ENCODE measurements at regions of chr3 and their contacts with region 1.

Region 1: DNA sequence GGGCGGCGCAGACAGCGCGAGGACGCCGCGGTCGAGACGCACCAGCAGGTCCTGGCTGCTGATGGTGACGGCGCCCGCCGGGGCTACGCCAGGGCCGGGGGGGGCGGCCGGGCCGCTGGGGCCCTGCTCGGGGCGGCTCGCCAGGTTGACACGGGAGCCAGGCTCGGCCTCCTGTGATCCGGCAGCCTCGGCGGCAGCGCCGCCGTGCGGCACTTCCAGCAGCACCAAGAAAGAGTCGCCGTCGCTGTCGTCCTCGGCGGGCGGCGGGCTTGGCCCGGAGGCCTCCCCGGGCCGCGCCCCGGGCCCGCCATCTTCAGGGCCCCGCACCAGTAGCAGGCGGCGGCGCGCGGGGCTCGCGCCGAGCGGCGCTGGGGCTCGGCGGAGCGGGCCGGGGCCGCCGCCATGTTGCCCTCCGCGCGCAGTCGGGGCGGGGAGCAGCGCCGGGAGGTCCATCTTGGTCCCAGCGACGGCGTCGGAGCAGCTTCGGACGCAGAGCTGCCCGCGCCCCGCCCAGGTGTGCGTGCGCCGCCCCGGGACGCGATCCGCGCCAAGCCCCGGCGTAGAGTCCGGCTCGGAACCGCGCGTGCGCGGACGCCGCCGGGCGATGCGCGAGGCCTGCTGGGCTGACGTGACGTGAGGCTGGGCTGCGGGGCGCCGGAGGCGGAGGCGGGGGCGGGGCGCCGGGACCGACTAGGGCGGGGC is at the start of gene ZXDC:
- DNase-seq: peak; percentile 94
- H3K4me3 ChIP-seq: peak within 1 kb of the TSS; percentile 58 to 72 (median 65)
- H3K27ac ChIP-seq: peak within 1 kb of the TSS; percentile 73
- H3K4me1 ChIP-seq: peaks cover 33% of the 10 kb centered on the region
- H3K27me3 ChIP-seq: no peaks in the 10 kb centered on the region
- CTCF ChIP-seq: peak; percentile 21 to 58
- POLR2A ChIP-seq: peak; percentile 81
- total RNA-seq, gene ZXDC: 21.3 and 22.6 TPM in 2 replicates

Region 2: DNA sequence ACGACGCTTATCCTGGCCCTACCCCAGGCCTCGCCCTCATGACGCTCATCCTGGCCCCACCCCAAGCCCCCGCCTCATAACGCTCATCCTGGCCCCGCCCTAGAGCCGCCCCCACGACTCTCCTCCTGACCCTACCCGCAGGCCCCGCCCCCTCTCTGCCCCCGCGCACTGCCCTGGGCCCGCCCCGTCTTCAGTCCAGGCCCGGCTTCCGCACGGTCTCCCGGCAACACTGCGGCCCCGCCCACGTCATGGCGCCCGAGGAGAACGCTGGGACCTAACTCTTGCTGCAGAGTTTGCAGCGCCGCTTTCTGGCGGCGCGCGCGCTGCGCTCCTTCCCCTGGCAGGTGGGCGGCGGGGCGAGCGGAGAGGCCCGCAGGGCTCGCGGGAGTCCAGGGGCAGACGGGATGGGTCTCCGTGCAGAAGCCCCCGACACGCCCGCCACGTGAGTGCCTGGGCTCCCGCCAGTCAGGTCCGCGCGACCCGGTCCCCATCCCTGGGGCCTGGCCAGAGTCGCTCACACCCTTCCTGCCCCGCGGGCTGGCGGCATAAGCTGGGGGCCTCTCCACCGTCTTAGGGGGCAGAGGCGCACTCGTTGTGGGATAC is 559.1 kb before region 1 on chr3:
- CTCF ChIA-PET with region 1: no interaction called
- POLR2A ChIA-PET with region 1: no interaction called
- dilution Hi-C with region 1: no loop called
- intact Hi-C with region 1: loop called (anchors 10 kb)
- DNase-seq: peak; percentile 92
- H3K4me3 ChIP-seq: peak overlapping the region; percentile 4 to 85 (median 62)
- H3K27ac ChIP-seq: peak overlapping the region; percentile 54
- H3K4me1 ChIP-seq: no peaks in the 10 kb centered on the region
- H3K27me3 ChIP-seq: no peaks in the 10 kb centered on the region
- CTCF ChIP-seq: no peak
- POLR2A ChIP-seq: peak; percentile 36

Region 3: DNA sequence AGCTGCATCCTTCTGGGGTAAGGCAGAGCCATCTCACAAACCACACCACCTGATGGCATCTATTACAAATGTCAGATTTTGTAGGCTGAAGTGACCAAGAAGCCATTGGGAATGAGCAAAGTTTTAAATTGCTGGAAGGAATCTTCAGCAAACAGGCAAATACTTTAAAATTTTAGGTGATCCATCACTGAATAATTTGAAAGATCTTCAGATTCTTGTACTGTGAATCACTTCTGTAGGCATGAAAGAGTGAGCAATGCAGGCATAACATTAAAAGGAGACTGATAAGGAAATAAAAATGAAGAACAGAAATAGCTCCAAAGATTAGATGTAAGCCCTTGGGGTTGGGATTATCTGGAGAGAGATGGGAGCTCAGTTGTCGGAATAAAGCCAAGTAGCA is 259.1 kb before region 1 on chr3:
- CTCF ChIA-PET with region 1: no interaction called
- POLR2A ChIA-PET with region 1: no interaction called
- dilution Hi-C with region 1: no loop called
- intact Hi-C with region 1: no loop called
- DNase-seq: no peak
- H3K4me3 ChIP-seq: no peak overlapping the region
- H3K27ac ChIP-seq: no peak overlapping the region
- H3K4me1 ChIP-seq: peaks cover 8% of the 10 kb centered on the region
- H3K27me3 ChIP-seq: peaks cover 25 to 46% of the 10 kb centered on the region in 2 experiments
- CTCF ChIP-seq: no peak
- POLR2A ChIP-seq: no peak

Region 4: DNA sequence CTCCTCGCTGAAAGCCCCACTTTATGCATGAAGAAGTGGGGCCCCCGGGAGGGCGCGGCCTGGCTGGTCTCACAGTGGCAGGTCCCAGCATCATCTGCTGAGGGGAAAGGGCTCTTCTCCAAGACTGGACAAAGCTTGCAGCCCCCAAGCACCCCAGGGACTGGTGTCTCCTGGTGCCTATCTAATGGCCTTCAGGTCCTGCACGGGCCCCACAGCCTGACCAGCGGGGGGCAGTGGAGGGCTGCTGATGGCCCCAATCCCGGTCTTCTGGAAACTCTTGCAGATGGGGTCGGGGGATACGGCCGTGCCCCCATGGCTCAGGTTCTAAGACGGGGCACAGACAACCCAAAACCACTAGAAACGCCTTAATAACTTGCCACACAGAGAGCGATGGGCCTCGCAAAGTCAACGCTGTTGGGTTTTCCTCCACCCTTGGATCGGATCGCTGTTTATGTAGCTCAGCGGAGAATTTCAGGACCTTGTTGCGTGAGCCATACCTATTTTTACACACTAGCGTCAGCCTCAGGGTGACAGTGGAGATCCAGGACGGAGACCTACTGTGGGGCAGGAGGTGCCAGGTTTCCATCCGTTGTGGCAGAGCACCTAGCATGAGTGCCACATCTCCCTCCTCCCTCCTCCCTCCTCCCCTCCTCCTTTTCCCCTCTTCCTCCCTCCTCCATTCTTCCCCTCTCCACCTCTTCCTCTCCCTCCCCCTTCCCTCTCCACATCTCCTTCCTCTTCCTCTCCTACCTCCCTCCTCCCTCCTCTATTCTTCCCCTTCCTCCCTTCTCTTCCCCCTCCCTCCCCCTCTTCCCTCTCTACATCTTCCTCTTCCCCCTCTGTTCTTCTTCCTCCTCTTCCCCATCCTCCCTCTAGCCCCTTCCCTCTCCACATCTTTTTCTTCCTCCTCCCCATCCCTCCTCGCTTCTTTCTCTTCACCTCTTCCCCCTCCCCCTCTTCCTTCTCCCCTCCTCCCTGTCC is 215.9 kb before region 1 on chr3:
- CTCF ChIA-PET with region 1: interaction called, 7 read pairs
- POLR2A ChIA-PET with region 1: no interaction called
- dilution Hi-C with region 1: no loop called
- intact Hi-C with region 1: loop called (anchors 2 kb)
- DNase-seq: peak; percentile 54
- H3K4me3 ChIP-seq: no peak overlapping the region
- H3K27ac ChIP-seq: no peak overlapping the region
- H3K4me1 ChIP-seq: no peaks in the 10 kb centered on the region
- H3K27me3 ChIP-seq: peaks cover 0 to under 1% of the 10 kb centered on the region in 2 experiments
- CTCF ChIP-seq: peak; percentile 86 to 88
- POLR2A ChIP-seq: no peak

Region 5: DNA sequence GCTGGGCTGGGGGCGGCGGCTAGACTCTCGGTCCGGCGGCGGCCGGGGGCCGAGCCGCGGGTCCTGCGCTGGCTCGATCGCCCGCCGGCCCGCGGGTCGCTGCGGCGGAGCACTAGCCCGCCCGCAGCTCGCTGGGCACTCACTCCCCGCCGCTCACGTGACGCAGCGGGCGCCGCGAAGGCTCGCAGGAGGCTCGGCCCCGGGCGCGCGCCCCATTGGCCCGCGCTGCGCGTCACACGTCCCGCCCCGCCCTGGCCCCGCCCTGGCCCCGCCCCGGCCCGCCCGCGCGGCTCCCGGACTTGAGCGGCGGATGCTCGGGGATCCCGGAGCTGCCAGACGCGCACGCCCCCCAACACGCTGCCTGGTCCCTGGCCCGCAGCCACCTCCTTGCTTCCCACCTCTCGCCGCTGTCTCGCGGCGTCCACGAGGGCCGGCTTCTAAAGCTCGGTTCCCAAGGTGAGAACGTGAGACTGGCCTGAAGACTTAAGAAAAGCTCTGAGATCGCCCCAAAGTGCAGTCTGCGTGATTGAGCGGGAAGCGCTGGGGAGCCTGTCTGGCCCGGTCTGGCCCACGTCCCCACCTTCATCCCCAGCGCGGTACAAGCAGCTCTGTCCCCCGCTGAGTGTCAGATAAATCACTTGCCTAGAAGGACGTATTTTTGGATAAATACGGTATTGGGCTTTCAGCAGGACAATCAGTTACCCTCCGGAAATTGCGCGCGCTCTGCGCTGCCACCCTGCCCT is 118.1 kb before region 1 on chr3 and contains the start of gene KLF15:
- CTCF ChIA-PET with region 1: no interaction called
- POLR2A ChIA-PET with region 1: no interaction called
- dilution Hi-C with region 1: no loop called
- intact Hi-C with region 1: loop called (anchors 1 kb)
- DNase-seq: peak; percentile 82
- H3K4me3 ChIP-seq: peak within 1 kb of the TSS; percentile 21 to 55 (median 42)
- H3K27ac ChIP-seq: no peak within 1 kb of the TSS
- H3K4me1 ChIP-seq: peaks cover 12% of the 10 kb centered on the region
- H3K27me3 ChIP-seq: peaks cover 14 to 29% of the 10 kb centered on the region in 2 experiments
- CTCF ChIP-seq: no peak
- POLR2A ChIP-seq: no peak
- total RNA-seq, gene KLF15: 1.4 and 3.0 TPM in 2 replicates

Region 6: GRCh38 chr3:126487151-126487771 is 11.7 kb after region 1 on chr3:
- CTCF ChIA-PET with region 1: interaction called, 8 read pairs
- POLR2A ChIA-PET with region 1: no interaction called
- dilution Hi-C with region 1: no loop called
- intact Hi-C with region 1: loop called (anchors 1 kb)
- DNase-seq: peak; percentile 48
- H3K4me3 ChIP-seq: no peak overlapping the region
- H3K27ac ChIP-seq: no peak overlapping the region
- H3K4me1 ChIP-seq: peaks cover 15% of the 10 kb centered on the region
- H3K27me3 ChIP-seq: peaks cover 0 to 1% of the 10 kb centered on the region in 2 experiments
- CTCF ChIP-seq: peak; percentile 16 to 45
- POLR2A ChIP-seq: no peak

Region 7: GRCh38 chr3:126703512-126704462 is 228.2 kb after region 1 on chr3 and contains the start of gene CHCHD6:
- CTCF ChIA-PET with region 1: no interaction called
- POLR2A ChIA-PET with region 1: no interaction called
- dilution Hi-C with region 1: no loop called
- intact Hi-C with region 1: loop called (anchors 5 kb)
- DNase-seq: peak; percentile 95
- H3K4me3 ChIP-seq: peak within 1 kb of the TSS; percentile 31 to 45 (median 35)
- H3K27ac ChIP-seq: no peak within 1 kb of the TSS
- H3K4me1 ChIP-seq: peaks cover 10% of the 10 kb centered on the region
- H3K27me3 ChIP-seq: peaks cover 4 to 21% of the 10 kb centered on the region in 2 experiments
- CTCF ChIP-seq: peak in 1 of 2 donors; percentile 2
- POLR2A ChIP-seq: no peak
- total RNA-seq, gene CHCHD6: 8.4 and 13.4 TPM in 2 replicates

Region 8: GRCh38 chr3:126911162-126912026 is 435.8 kb after region 1 on chr3:
- CTCF ChIA-PET with region 1: no interaction called
- POLR2A ChIA-PET with region 1: no interaction called
- dilution Hi-C with region 1: no loop called
- intact Hi-C with region 1: loop called (anchors 10 kb)
- DNase-seq: peak; percentile 96
- H3K4me3 ChIP-seq: no peak overlapping the region
- H3K27ac ChIP-seq: peak overlapping the region; percentile 59
- H3K4me1 ChIP-seq: peaks cover 24% of the 10 kb centered on the region
- H3K27me3 ChIP-seq: peaks cover 11 to 23% of the 10 kb centered on the region in 2 experiments
- CTCF ChIP-seq: no peak
- POLR2A ChIP-seq: peak; percentile 62